Naive thymus-derived CD4-positive, alpha-beta T cell (primary cell): ENCODE measurements at regions of chr7 and their contacts with region 1.

Region 1: DNA sequence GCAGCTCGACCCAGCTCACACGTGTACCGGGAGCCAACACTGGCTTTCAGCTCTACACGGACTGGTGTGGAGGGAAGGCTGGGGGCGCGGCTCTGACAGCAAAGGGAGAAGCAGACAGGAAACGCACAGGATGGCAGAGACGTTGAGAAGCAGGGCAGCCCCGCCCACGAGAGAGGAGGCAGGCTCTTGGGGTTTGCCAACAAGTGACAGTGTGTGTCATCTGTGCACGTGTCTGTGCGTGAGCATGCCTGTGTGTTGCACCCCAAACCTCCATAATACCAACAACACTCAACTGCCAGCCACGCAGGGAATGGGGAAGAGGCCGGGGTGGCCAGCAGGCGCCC is 64.4 kb upstream of the PDGFA start:
- DNase-seq: peak; percentile 69 to 95 (median 90)
- ATAC-seq: peak; percentile 98
- H3K4me3 ChIP-seq: peak overlapping the region; percentile 85
- H3K4me3 Mint-ChIP-seq: peak overlapping the region; percentile 85 to 96 (median 90)
- H3K27ac ChIP-seq: peak overlapping the region; percentile 78
- H3K27ac Mint-ChIP-seq: peak overlapping the region; percentile 93 to 98 (median 97)
- H3K4me1 ChIP-seq: peaks cover 15 to 17% of the 10 kb centered on the region in 2 donors
- H3K4me1 Mint-ChIP-seq: peaks cover 14 to 44% (median 35%) of the 10 kb centered on the region in 7 donors
- H3K27me3 ChIP-seq: no peaks in the 10 kb centered on the region
- H3K27me3 Mint-ChIP-seq: no peaks in the 10 kb centered on the region

Region 2: DNA sequence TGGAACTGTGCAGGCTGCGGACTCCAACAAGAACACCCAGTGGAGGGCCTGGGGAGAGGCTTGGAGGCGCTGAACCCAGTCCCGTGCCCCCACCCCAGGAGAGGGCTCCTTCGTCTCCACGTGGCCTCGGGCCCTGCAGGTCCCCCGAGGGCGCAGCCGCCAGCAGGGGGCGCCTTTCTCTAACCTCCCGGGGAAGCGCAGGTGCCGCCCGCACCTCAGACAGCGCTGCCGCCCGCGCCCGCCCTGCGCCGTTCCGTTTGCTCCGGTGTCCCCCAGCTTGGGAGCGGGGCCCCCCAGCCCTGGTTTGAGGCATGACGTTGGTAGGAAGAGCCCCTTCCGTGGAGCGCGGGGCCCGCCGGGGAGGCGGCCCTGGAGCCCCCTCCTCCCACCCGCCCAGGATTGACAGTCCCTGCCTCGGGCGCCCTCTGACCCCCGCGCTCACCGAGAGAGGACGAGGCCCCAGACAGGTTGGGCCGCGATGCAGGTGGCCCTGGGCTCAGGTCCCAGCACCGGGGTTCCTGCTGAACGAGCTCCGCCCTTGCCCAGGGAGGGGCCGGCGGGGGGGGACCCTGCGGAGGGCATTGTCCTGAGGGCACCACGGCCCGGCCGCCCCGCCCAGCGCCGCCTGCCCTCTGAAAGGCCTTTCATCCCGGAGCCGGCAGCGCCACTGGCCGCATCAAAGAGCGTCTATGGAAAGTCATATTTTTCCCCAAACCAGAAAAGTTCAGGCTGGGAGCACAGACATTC is 251.3 kb before region 1 on chr7:
- CTCF ChIA-PET with region 1: no interaction called
- POLR2A ChIA-PET with region 1: no interaction called
- intact Hi-C with region 1: loop called in 1 of 2 experiments (anchors 1 kb)
- DNase-seq: peak; percentile 79 to 96 (median 89)
- ATAC-seq: peak; percentile 96
- H3K4me3 ChIP-seq: peak overlapping the region; percentile 55
- H3K4me3 Mint-ChIP-seq: peak overlapping the region in 4 of 10 donors; percentile 35 to 64 (median 46)
- H3K27ac ChIP-seq: peak overlapping the region; percentile 12
- H3K27ac Mint-ChIP-seq: no peak overlapping the region
- H3K4me1 ChIP-seq: no peaks in the 10 kb centered on the region
- H3K4me1 Mint-ChIP-seq: peaks cover 3 to 23% (median 17%) of the 10 kb centered on the region in 7 donors
- H3K27me3 ChIP-seq: no peaks in the 10 kb centered on the region
- H3K27me3 Mint-ChIP-seq: peaks cover 0 to 7% (median 0%) of the 10 kb centered on the region in 5 donors

Region 3: GRCh38 chr7:518630-519483 is 65.2 kb before region 1 on chr7:
- CTCF ChIA-PET with region 1: no interaction called
- POLR2A ChIA-PET with region 1: no interaction called
- intact Hi-C with region 1: loop called in 1 of 2 experiments (anchors 5 kb)
- DNase-seq: peak in 4 of 9 donors; percentile 17 to 66 (median 24)
- ATAC-seq: peak; percentile 18
- H3K4me3 ChIP-seq: peak overlapping the region; percentile 52
- H3K4me3 Mint-ChIP-seq: peak overlapping the region; percentile 59 to 89 (median 80)
- H3K27ac ChIP-seq: no peak overlapping the region
- H3K27ac Mint-ChIP-seq: peak overlapping the region in 2 of 9 donors; percentile 39 to 43
- H3K4me1 ChIP-seq: peaks cover 0 to 30% of the 10 kb centered on the region in 2 donors
- H3K4me1 Mint-ChIP-seq: peaks cover 0 to 21% (median 15%) of the 10 kb centered on the region in 7 donors
- H3K27me3 ChIP-seq: peaks cover 0 to 20% of the 10 kb centered on the region in 2 donors
- H3K27me3 Mint-ChIP-seq: peaks cover 22 to 47% (median 24%) of the 10 kb centered on the region in 5 donors

Region 4: GRCh38 chr7:620052-620451 is 36.0 kb after region 1 on chr7:
- CTCF ChIA-PET with region 1: interaction called, 3 read pairs
- POLR2A ChIA-PET with region 1: interaction called, 7 read pairs
- intact Hi-C with region 1: loop called (anchors 1 kb)
- DNase-seq: no peak
- ATAC-seq: no peak
- H3K4me3 ChIP-seq: no peak overlapping the region
- H3K4me3 Mint-ChIP-seq: peak overlapping the region in 7 of 10 donors; percentile 33 to 93 (median 79)
- H3K27ac ChIP-seq: peak overlapping the region; percentile 91
- H3K27ac Mint-ChIP-seq: peak overlapping the region; percentile 96 to 100 (median 99)
- H3K4me1 ChIP-seq: peaks cover 39 to 42% of the 10 kb centered on the region in 2 donors
- H3K4me1 Mint-ChIP-seq: peaks cover 32 to 77% (median 54%) of the 10 kb centered on the region in 7 donors
- H3K27me3 ChIP-seq: no peaks in the 10 kb centered on the region
- H3K27me3 Mint-ChIP-seq: no peaks in the 10 kb centered on the region

Region 5: DNA sequence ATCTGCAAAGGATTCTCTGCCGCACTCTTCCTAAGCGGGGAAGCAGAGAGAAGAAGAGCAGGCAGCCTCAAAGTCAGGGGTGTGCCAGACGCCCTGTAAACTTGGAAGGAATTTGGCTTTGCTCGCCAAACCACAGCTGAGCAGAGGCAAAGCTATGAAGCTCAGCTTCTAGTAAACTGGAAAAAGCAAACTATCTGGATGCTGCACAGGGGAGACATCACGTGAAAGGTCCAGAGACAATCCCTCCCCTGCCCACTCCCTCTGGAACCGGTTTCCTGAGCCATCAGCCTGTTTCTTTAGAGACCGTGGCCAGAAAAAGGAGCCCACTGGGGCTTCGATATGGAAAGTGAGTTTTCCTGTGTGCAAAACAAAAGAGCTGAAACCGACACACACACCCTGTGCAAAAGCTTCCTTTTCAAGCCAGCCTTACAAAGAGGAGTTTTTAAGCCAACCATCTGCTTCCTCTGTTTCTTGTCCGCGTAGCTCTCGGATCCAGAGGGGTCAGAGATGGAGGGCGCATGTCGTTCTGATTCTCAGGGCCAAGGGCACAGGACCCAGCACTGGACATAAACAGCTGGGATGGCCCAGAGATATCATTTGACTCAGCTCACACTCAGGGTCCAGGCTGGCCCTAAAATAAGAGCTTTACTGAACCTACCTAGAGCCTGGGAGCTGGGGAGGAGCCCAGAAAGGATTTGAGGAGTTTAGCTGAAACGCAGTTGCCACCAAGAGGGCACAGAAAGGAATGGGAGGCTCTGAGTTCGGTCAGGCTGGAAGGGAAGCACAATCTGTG is 84.2 kb after region 1 on chr7:
- CTCF ChIA-PET with region 1: no interaction called
- POLR2A ChIA-PET with region 1: interaction called, 8 read pairs
- intact Hi-C with region 1: loop called in 1 of 2 experiments (anchors 1 kb)
- DNase-seq: peak in 6 of 9 donors; percentile 13 to 38 (median 32)
- ATAC-seq: no peak
- H3K4me3 ChIP-seq: peak overlapping the region; percentile 28
- H3K4me3 Mint-ChIP-seq: peak overlapping the region in 1 of 10 donors; percentile 6
- H3K27ac ChIP-seq: peak overlapping the region; percentile 61
- H3K27ac Mint-ChIP-seq: no peak overlapping the region
- H3K4me1 ChIP-seq: peaks cover 0 to 9% of the 10 kb centered on the region in 2 donors
- H3K4me1 Mint-ChIP-seq: peaks cover 0 to 6% (median 0%) of the 10 kb centered on the region in 7 donors
- H3K27me3 ChIP-seq: no peaks in the 10 kb centered on the region
- H3K27me3 Mint-ChIP-seq: no peaks in the 10 kb centered on the region

Region 6: GRCh38 chr7:726084-726853 is 142.2 kb after region 1 on chr7 and contains the start of gene DNAAF5:
- CTCF ChIA-PET with region 1: no interaction called
- POLR2A ChIA-PET with region 1: no interaction called
- intact Hi-C with region 1: loop called (anchors 1 to 2 kb)
- DNase-seq: peak; percentile 73 to 90 (median 84)
- ATAC-seq: peak; percentile 97
- H3K4me3 ChIP-seq: peak within 1 kb of the TSS; percentile 81
- H3K4me3 Mint-ChIP-seq: peak within 1 kb of the TSS; percentile 72 to 88 (median 84)
- H3K27ac ChIP-seq: peak within 1 kb of the TSS; percentile 73
- H3K27ac Mint-ChIP-seq: peak within 1 kb of the TSS in 8 of 9 donors; percentile 57 to 83 (median 71)
- H3K4me1 ChIP-seq: peaks cover 14 to 15% of the 10 kb centered on the region in 2 donors
- H3K4me1 Mint-ChIP-seq: peaks cover 20 to 37% (median 21%) of the 10 kb centered on the region in 7 donors
- H3K27me3 ChIP-seq: no peaks in the 10 kb centered on the region
- H3K27me3 Mint-ChIP-seq: no peaks in the 10 kb centered on the region
- total RNA-seq, gene DNAAF5: 12.5 to 25.7 (median 14.6) TPM

Region 7: GRCh38 chr7:1397491-1398327 is 813.6 kb after region 1 on chr7:
- CTCF ChIA-PET with region 1: no interaction called
- POLR2A ChIA-PET with region 1: no interaction called
- intact Hi-C with region 1: no loop called
- DNase-seq: no peak
- ATAC-seq: no peak
- H3K4me3 ChIP-seq: no peak overlapping the region
- H3K4me3 Mint-ChIP-seq: no peak overlapping the region
- H3K27ac ChIP-seq: no peak overlapping the region
- H3K27ac Mint-ChIP-seq: no peak overlapping the region
- H3K4me1 ChIP-seq: no peaks in the 10 kb centered on the region
- H3K4me1 Mint-ChIP-seq: no peaks in the 10 kb centered on the region
- H3K27me3 ChIP-seq: peaks cover 0 to 2% of the 10 kb centered on the region in 2 donors
- H3K27me3 Mint-ChIP-seq: peaks cover 18 to 63% (median 48%) of the 10 kb centered on the region in 5 donors